ENCODE measurements at regions of chr5 and their contacts with region 1.

Region 1: DNA sequence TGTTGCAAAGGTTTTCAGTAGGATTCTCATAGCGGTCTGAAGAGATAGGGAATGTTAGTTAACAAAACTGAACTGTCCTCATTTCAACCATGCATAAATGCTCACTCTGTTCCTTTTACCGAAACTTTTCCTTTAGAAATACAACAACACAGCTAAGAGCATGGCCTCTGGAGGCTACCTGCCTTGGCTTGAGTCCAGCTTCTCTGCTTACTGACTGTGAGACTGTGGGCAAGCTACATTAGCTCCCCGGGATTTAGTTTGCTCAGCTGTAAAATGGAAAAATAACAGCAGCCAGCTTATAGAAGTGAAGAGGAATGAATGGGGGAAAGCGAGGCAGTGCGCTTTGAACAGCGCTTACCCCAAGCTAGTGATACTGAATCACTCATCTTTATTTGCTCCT is 507.9 kb upstream of the DAP start:
- DNase-seq: no peak
- H3K4me3 ChIP-seq: no peak overlapping the region
- H3K27ac ChIP-seq: no peak overlapping the region
- H3K4me1 ChIP-seq: no peaks in the 10 kb centered on the region
- H3K27me3 ChIP-seq: no peaks in the 10 kb centered on the region
- CTCF ChIP-seq: no peak
- EP300 ChIP-seq: no peak
- POLR2A ChIP-seq: no peak
- RAD21 ChIP-seq: no peak

Region 2: DNA sequence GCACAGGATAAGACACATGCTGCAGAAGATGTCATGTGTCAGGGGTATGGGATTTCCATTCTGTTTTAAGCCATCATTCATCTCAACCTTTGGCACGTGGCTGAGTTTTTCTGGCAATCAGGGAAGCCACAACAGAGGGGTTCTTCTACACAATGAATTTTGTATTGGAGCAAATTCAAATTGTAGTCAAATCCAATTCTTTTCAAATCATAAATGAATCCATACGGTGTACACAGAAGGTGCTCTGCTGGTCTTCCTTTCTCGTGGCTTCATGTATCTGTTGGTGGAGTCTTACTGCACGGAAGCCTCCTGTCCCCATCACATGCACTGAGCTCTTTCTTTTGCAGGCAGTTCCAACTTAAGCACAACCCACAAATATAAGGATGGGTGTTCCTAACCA is 71.2 kb before region 1 on chr5:
- CTCF ChIA-PET with region 1: no interaction called
- POLR2A ChIA-PET with region 1: no interaction called
- DNase-seq: no peak
- H3K4me3 ChIP-seq: no peak overlapping the region
- H3K27ac ChIP-seq: no peak overlapping the region
- H3K4me1 ChIP-seq: no peaks in the 10 kb centered on the region
- H3K27me3 ChIP-seq: no peaks in the 10 kb centered on the region
- CTCF ChIP-seq: no peak
- EP300 ChIP-seq: no peak
- POLR2A ChIP-seq: no peak
- RAD21 ChIP-seq: no peak

Region 3: DNA sequence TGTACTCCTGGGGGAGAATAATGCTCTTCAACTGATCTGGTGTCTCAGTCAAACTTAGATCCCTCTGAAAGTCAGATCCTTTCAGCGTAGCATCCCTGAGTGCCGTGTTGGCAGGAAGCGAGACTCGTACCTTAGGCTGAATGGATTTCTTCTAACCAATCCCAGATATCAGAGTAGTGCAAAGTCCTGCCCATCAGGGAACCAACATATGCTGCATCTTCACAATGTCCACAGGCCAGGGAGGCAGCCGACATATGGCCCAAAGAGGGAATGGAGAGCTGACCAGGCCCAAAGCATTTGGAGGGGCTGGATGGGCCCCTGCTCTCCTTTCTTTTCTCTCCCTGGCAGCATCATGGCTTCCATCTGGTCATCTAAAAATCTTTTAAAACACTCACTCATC is 10.9 kb before region 1 on chr5:
- CTCF ChIA-PET with region 1: interaction called, 12 read pairs
- POLR2A ChIA-PET with region 1: no interaction called
- DNase-seq: no peak
- H3K4me3 ChIP-seq: no peak overlapping the region
- H3K27ac ChIP-seq: no peak overlapping the region
- H3K4me1 ChIP-seq: 0 out of 7 replicates have a peak, but pooled peaks cover 0 to 2% (median 0%) of the 10 kb centered on the region in 4 experiments
- H3K27me3 ChIP-seq: no peaks in the 10 kb centered on the region
- CTCF ChIP-seq: no peak
- EP300 ChIP-seq: no peak
- POLR2A ChIP-seq: no peak
- RAD21 ChIP-seq: no peak

Region 4: DNA sequence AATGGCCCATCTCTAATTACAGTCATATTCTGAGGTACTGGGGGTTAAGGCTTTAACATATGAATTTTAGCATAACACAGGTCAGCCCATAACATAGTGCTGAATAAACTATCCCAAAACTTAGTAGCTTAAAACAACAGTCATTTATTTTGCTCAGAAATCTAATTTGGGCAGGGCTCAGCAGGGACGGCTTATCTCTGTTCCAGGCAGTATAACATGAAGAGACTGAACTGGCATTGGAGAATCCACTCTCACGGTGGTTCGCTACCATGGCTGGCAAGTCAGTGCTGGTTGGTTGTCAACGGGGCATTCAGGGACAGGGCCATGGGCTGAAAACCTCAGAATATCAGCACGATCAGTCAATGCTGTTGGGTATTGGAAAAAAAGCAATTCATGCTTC is 13.0 kb after region 1 on chr5:
- CTCF ChIA-PET with region 1: interaction called, 14 read pairs
- POLR2A ChIA-PET with region 1: no interaction called
- DNase-seq: no peak
- H3K4me3 ChIP-seq: no peak overlapping the region
- H3K27ac ChIP-seq: no peak overlapping the region
- H3K4me1 ChIP-seq: no peaks in the 10 kb centered on the region
- H3K27me3 ChIP-seq: no peaks in the 10 kb centered on the region
- CTCF ChIP-seq: no peak
- EP300 ChIP-seq: no peak
- POLR2A ChIP-seq: no peak
- RAD21 ChIP-seq: no peak

Region 5: GRCh38 chr5:11322133-11322532 is 53.2 kb after region 1 on chr5:
- CTCF ChIA-PET with region 1: no interaction called
- POLR2A ChIA-PET with region 1: no interaction called
- DNase-seq: no peak
- H3K4me3 ChIP-seq: no peak overlapping the region
- H3K27ac ChIP-seq: no peak overlapping the region
- H3K4me1 ChIP-seq: no peaks in the 10 kb centered on the region
- H3K27me3 ChIP-seq: no peaks in the 10 kb centered on the region
- CTCF ChIP-seq: no peak
- EP300 ChIP-seq: no peak
- POLR2A ChIP-seq: no peak
- RAD21 ChIP-seq: no peak

Region 6: GRCh38 chr5:11547745-11548144 is 278.9 kb after region 1 on chr5:
- CTCF ChIA-PET with region 1: no interaction called
- POLR2A ChIA-PET with region 1: no interaction called
- DNase-seq: no peak
- H3K4me3 ChIP-seq: no peak overlapping the region
- H3K27ac ChIP-seq: no peak overlapping the region
- H3K4me1 ChIP-seq: no peaks in the 10 kb centered on the region
- H3K27me3 ChIP-seq: no peaks in the 10 kb centered on the region
- CTCF ChIP-seq: no peak
- EP300 ChIP-seq: no peak
- POLR2A ChIP-seq: no peak
- RAD21 ChIP-seq: no peak